Transverse colon (tissue), 4 donors: ENCODE measurements at regions of chrX and their contacts with region 1.

Region 1: GRCh38 chrX:94288325-94288724 is 614.3 kb downstream of the FAM133A start:
- DNase-seq: no peak
- H3K4me3 ChIP-seq: no peak overlapping the region
- H3K27ac ChIP-seq: no peak overlapping the region
- H3K4me1 ChIP-seq: no peaks in the 10 kb centered on the region
- H3K27me3 ChIP-seq: no peaks in the 10 kb centered on the region
- CTCF ChIP-seq: no peak
- EP300 ChIP-seq: no peak
- POLR2A ChIP-seq: no peak

Region 2: GRCh38 chrX:94961730-94962129 is 673.4 kb after region 1 on chrX:
- in situ Hi-C with region 1: no loop called
- intact Hi-C with region 1: loop called (anchors 10 kb)
- DNase-seq: no peak
- H3K4me3 ChIP-seq: no peak overlapping the region
- H3K27ac ChIP-seq: no peak overlapping the region
- H3K4me1 ChIP-seq: no peaks in the 10 kb centered on the region
- H3K27me3 ChIP-seq: no peaks in the 10 kb centered on the region
- CTCF ChIP-seq: no peak
- EP300 ChIP-seq: no peak
- POLR2A ChIP-seq: no peak